Thyroid gland (tissue), 4 donors: ENCODE measurements at regions of chr20 and their contacts with region 1.

Region 1: GRCh38 chr20:10832141-10832540 is 158.3 kb upstream of the JAG1 start:
- DNase-seq: no peak
- H3K4me3 ChIP-seq: no peak overlapping the region
- H3K27ac ChIP-seq: no peak overlapping the region
- H3K4me1 ChIP-seq: no peaks in the 10 kb centered on the region
- H3K27me3 ChIP-seq: no peaks in the 10 kb centered on the region
- CTCF ChIP-seq: no peak
- POLR2A ChIP-seq: no peak

Region 2: DNA sequence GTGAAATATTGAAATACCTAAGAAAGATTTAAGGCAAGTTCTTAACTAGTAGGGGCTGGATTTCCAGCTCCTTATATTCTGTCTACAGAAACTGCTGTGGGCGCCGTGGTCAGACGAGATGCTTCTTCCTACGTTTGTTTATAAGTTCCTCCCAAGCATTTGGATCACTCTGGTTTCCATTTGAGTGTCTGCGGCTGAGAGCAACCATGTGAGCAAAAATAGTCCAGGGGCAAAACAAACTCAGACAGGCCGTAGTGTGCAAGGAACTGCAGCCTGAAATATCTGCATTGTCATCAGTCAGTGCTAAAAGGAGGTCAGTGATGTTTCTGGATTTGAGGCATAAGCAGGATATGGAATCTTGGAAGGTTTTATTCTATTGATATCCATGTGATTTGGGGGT is 327.6 kb after region 1 on chr20:
- intact Hi-C with region 1: no loop called
- DNase-seq: peak; percentile 49 to 66
- H3K4me3 ChIP-seq: no peak overlapping the region
- H3K27ac ChIP-seq: peak overlapping the region in 2 of 3 donors; percentile 33 to 60
- H3K4me1 ChIP-seq: peaks cover 11 to 13% of the 10 kb centered on the region in 2 donors
- H3K27me3 ChIP-seq: no peaks in the 10 kb centered on the region
- CTCF ChIP-seq: no peak
- POLR2A ChIP-seq: no peak

Region 3: DNA sequence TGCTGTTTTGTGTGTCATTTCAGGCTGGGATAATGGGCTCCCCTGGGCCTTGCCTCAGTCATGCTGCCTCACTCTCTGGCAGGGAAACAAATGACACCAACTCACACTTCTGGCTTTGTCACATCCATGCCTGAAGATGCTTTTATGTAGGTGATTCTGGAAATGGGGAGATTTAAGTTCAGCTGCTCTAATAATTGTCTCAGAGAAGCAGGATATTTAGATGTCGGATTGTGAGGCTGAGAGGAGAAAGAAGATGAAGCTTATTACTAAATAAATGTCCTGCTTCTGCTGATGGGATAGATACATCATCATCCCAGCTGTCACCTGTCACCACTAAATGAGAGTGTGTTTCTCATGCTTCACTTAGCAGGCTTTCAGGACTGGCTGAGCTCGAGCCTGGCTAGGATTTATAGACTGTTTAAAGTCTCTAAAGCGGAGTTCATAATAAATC is 1696.5 kb after region 1 on chr20:
- intact Hi-C with region 1: loop called (anchors 10 kb)
- DNase-seq: no peak
- H3K4me3 ChIP-seq: no peak overlapping the region
- H3K27ac ChIP-seq: no peak overlapping the region
- H3K4me1 ChIP-seq: no peaks in the 10 kb centered on the region
- H3K27me3 ChIP-seq: no peaks in the 10 kb centered on the region
- CTCF ChIP-seq: no peak
- POLR2A ChIP-seq: no peak